ENCODE measurements at regions of chr7 and their contacts with region 1.

Region 1: DNA sequence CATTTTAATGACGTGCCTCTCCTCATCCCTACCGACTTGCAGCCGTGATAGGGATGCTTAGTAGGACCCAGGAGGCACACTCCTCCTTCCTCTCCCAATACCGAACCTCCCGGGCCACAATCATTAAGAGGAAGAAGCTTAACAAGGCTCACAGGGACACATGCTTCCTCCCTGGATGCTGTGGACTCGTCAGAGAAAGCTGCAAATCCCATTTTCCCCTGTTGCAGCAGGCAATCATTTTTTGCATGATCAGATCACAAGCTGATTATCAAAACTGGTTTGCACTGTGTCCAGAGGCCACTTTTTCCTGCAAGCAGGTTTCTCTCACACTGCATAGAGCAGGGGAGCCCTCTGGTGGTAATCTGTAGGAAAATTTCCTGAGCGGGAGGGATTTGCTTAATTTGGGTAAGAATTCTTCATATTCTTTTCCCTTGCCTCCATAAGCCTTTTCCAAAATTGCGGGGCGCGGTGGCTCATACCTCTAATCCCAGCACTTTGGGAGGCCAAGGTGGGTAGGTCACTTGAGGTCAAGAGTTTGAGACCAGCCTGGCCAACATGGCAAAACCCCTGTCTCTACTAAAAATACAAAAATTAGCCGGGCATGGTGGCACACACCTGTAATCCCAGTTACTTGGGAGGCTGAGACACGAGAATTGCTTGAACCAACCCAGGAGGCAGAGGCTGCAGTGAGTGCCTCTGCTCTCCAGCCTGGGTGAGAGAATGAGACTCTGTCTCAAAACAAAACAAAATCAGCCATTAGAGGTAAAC is 16.1 kb upstream of the LAMB4 start:
- DNase-seq: peak in 4 of 5 donors; percentile 26 to 41 (median 34)
- H3K4me3 ChIP-seq: no peak overlapping the region
- H3K4me3 Mint-ChIP-seq: no peak overlapping the region
- H3K27ac ChIP-seq: no peak overlapping the region
- H3K27ac Mint-ChIP-seq: no peak overlapping the region
- H3K4me1 ChIP-seq: no peaks in the 10 kb centered on the region
- H3K4me1 Mint-ChIP-seq: no peaks in the 10 kb centered on the region
- H3K27me3 ChIP-seq: no peaks in the 10 kb centered on the region
- H3K27me3 Mint-ChIP-seq: peaks cover 5 to 11% of the 10 kb centered on the region in 2 donors

Region 2: DNA sequence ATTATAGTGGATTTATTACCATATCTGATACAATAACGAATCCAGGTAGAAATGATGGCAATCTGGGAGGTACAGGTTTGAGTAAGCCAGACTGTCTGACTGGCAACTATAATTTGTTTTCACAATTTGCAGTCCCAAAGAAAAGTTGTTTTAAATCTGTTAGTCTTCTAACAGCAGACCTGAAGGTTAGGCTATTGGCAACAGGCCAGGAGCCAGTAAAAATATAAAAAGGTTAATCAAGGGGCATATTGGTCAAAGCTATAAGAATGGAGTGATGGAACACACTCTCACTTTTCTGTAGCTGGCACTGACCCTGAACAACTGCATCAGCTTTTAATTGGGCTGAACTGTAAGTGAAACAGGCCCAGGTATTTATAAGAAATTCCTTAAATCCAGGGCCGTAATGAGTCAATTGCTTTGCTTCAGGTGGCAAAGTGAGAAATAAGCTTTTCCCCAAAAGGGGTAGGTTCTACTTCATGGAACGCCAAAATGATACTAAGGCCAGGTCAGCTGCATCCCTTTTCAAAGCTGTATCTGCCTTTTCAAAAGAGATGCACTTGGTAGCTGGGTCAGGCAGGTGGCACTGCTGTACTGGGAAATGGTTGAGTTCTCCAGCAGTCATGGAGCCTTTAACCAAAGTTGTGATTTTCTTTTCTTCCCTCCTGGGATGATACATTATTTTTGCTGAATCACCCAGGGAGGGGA is 683.4 kb before region 1 on chr7:
- CTCF ChIA-PET with region 1: interaction called, 5 read pairs
- POLR2A ChIA-PET with region 1: no interaction called
- intact Hi-C with region 1: loop called (anchors 2 kb)
- DNase-seq: peak; percentile 36 to 51 (median 46)
- H3K4me3 ChIP-seq: no peak overlapping the region
- H3K4me3 Mint-ChIP-seq: no peak overlapping the region
- H3K27ac ChIP-seq: no peak overlapping the region
- H3K27ac Mint-ChIP-seq: peak overlapping the region in 2 of 7 donors; percentile 6 to 17
- H3K4me1 ChIP-seq: no peaks in the 10 kb centered on the region
- H3K4me1 Mint-ChIP-seq: peaks cover 0 to 5% (median under 1%) of the 10 kb centered on the region in 4 donors
- H3K27me3 ChIP-seq: no peaks in the 10 kb centered on the region
- H3K27me3 Mint-ChIP-seq: no peaks in the 10 kb centered on the region

Region 3: GRCh38 chr7:107924841-107925504 is 221.3 kb before region 1 on chr7:
- CTCF ChIA-PET with region 1: no interaction called
- POLR2A ChIA-PET with region 1: no interaction called
- intact Hi-C with region 1: loop called (anchors 10 kb)
- DNase-seq: peak in 3 of 5 donors; percentile 6 to 7 (median 6)
- H3K4me3 ChIP-seq: no peak overlapping the region
- H3K4me3 Mint-ChIP-seq: peak overlapping the region in 6 of 8 donors; percentile 0 to 65 (median 18)
- H3K27ac ChIP-seq: no peak overlapping the region
- H3K27ac Mint-ChIP-seq: peak overlapping the region; percentile 0 to 87 (median 64)
- H3K4me1 ChIP-seq: peaks cover 25% of the 10 kb centered on the region
- H3K4me1 Mint-ChIP-seq: peaks cover 32 to 60% (median 42%) of the 10 kb centered on the region in 4 donors
- H3K27me3 ChIP-seq: no peaks in the 10 kb centered on the region
- H3K27me3 Mint-ChIP-seq: no peaks in the 10 kb centered on the region

Region 4: GRCh38 chr7:107934991-107935770 is 211.1 kb before region 1 on chr7:
- CTCF ChIA-PET with region 1: no interaction called
- POLR2A ChIA-PET with region 1: no interaction called
- intact Hi-C with region 1: no loop called
- DNase-seq: no peak
- H3K4me3 ChIP-seq: no peak overlapping the region
- H3K4me3 Mint-ChIP-seq: no peak overlapping the region
- H3K27ac ChIP-seq: no peak overlapping the region
- H3K27ac Mint-ChIP-seq: no peak overlapping the region
- H3K4me1 ChIP-seq: no peaks in the 10 kb centered on the region
- H3K4me1 Mint-ChIP-seq: peaks cover 3 to 6% (median 5%) of the 10 kb centered on the region in 4 donors
- H3K27me3 ChIP-seq: no peaks in the 10 kb centered on the region
- H3K27me3 Mint-ChIP-seq: no peaks in the 10 kb centered on the region